Naive thymus-derived CD4-positive, alpha-beta T cell (primary cell): ENCODE measurements at regions of chr17 and their contacts with region 1.

Region 1: DNA sequence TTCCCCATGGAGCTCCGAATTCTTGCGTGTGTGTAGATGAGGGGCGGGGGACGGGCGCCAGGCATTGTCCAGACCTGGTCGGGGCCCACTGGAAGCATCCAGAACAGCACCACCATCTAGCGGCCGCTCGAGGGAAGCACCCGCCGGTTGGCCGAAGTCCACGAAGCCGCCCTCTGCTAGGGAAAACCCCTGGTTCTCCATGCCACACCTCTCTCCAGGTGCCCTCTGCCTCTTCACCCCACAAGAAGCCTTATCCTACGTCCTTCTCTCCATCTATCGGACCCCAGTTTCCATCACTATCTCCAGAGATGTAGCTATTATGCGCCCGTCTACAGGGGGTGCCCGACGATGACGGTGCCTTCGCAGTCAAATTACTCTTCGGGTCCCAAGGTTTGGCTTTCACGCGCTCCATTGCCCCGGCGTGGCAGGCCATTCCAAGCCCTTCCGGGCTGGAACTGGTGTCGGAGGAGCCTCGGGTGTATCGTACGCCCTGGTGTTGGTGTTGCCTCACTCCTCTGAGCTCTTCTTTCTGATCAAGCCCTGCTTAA is 617 bp upstream of the SENP3 start:
- DNase-seq: peak; percentile 60 to 86 (median 71)
- ATAC-seq: peak; percentile 76
- H3K4me3 ChIP-seq: peak overlapping the region; percentile 96
- H3K4me3 Mint-ChIP-seq: peak overlapping the region; percentile 87 to 97 (median 93)
- H3K27ac ChIP-seq: peak overlapping the region; percentile 92
- H3K27ac Mint-ChIP-seq: peak overlapping the region; percentile 90 to 100 (median 96)
- H3K4me1 ChIP-seq: peaks cover 17 to 54% of the 10 kb centered on the region in 2 donors
- H3K4me1 Mint-ChIP-seq: peaks cover 33 to 55% (median 49%) of the 10 kb centered on the region in 7 donors
- H3K27me3 ChIP-seq: no peaks in the 10 kb centered on the region
- H3K27me3 Mint-ChIP-seq: peaks cover 0 to 2% (median 0%) of the 10 kb centered on the region in 5 donors

Region 2: DNA sequence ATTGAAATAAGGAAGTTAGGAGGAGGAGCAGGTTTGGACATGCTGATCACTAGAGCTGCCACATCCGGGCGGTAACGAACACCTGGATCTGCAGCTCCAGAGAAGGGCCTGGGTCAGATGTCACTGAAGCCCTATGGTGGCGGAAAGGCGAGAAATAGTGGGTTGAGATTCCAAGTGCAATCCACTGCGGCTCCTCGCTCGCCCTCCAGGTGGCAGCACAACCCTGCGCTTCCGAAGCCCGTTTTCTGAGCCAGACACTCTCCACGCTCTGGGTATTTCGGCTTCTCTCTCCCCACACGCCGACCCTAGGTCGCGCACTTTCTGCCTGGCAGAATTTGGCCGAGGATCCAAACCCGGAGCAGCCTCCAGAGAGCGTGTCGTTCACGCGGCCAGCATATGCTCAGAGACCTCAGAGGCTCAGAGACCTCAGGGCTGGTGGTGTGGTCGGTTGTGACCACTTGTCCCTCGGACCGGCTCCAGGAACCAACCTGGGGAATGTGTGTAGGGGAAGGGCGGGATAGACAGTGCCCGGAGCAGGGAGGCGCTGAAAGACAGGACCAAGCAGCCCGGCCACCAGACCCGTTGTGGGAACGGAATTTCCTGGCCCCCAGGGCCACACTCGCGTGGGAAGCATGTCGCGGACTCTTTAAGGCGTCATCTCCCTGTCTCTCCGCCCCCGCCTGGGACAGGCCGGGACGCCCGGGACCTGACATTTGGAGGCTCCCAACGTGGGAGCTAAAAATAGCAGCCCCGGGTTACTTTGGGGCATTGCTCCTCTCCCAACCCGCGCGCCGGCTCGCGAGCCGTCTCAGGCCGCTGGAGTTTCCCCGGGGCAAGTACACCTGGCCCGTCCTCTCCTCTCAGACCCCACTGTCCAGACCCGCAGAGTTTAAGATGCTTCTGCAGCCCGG is 280.3 kb before region 1 on chr17:
- CTCF ChIA-PET with region 1: interaction called, 3 read pairs
- POLR2A ChIA-PET with region 1: no interaction called
- intact Hi-C with region 1: loop called in 1 of 2 experiments (anchors 1 kb)
- DNase-seq: peak; percentile 76 to 88 (median 85)
- ATAC-seq: peak; percentile 95
- H3K4me3 ChIP-seq: peak overlapping the region; percentile 66
- H3K4me3 Mint-ChIP-seq: peak overlapping the region; percentile 77 to 87 (median 84)
- H3K27ac ChIP-seq: no peak overlapping the region
- H3K27ac Mint-ChIP-seq: peak overlapping the region in 7 of 9 donors; percentile 6 to 88 (median 51)
- H3K4me1 ChIP-seq: peaks cover 11 to 23% of the 10 kb centered on the region in 2 donors
- H3K4me1 Mint-ChIP-seq: peaks cover 14 to 31% (median 21%) of the 10 kb centered on the region in 7 donors
- H3K27me3 ChIP-seq: no peaks in the 10 kb centered on the region
- H3K27me3 Mint-ChIP-seq: peaks cover 6 to 44% (median 17%) of the 10 kb centered on the region in 5 donors

Region 3: GRCh38 chr17:7351665-7352501 is 209.2 kb before region 1 on chr17 and contains the start of gene KCTD11:
- CTCF ChIA-PET with region 1: interaction called, 11 read pairs
- POLR2A ChIA-PET with region 1: interaction called, 5 read pairs
- intact Hi-C with region 1: loop called (anchors 1 kb)
- DNase-seq: peak; percentile 40 to 88 (median 58)
- ATAC-seq: peak; percentile 72
- H3K4me3 ChIP-seq: peak within 1 kb of the TSS; percentile 57
- H3K4me3 Mint-ChIP-seq: peak within 1 kb of the TSS; percentile 78 to 94 (median 88)
- H3K27ac ChIP-seq: peak within 1 kb of the TSS; percentile 74
- H3K27ac Mint-ChIP-seq: peak within 1 kb of the TSS; percentile 72 to 91 (median 86)
- H3K4me1 ChIP-seq: peaks cover 10 to 27% of the 10 kb centered on the region in 2 donors
- H3K4me1 Mint-ChIP-seq: peaks cover 14 to 62% (median 43%) of the 10 kb centered on the region in 7 donors
- H3K27me3 ChIP-seq: no peaks in the 10 kb centered on the region
- H3K27me3 Mint-ChIP-seq: no peaks in the 10 kb centered on the region
- total RNA-seq, gene KCTD11: 2.7 to 13.7 (median 4.0) TPM

Region 4: GRCh38 chr17:7413346-7413985 is 147.6 kb before region 1 on chr17:
- CTCF ChIA-PET with region 1: no interaction called
- POLR2A ChIA-PET with region 1: no interaction called
- intact Hi-C with region 1: no loop called
- DNase-seq: no peak
- ATAC-seq: no peak
- H3K4me3 ChIP-seq: no peak overlapping the region
- H3K4me3 Mint-ChIP-seq: no peak overlapping the region
- H3K27ac ChIP-seq: no peak overlapping the region
- H3K27ac Mint-ChIP-seq: no peak overlapping the region
- H3K4me1 ChIP-seq: peaks cover 0 to 3% of the 10 kb centered on the region in 2 donors
- H3K4me1 Mint-ChIP-seq: peaks cover 0 to 19% (median 5%) of the 10 kb centered on the region in 7 donors
- H3K27me3 ChIP-seq: no peaks in the 10 kb centered on the region
- H3K27me3 Mint-ChIP-seq: peaks cover 0 to 11% (median 0%) of the 10 kb centered on the region in 5 donors

Region 5: GRCh38 chr17:7454980-7455379 is 106.1 kb before region 1 on chr17:
- CTCF ChIA-PET with region 1: interaction called, 3 read pairs
- POLR2A ChIA-PET with region 1: interaction called, 5 read pairs
- intact Hi-C with region 1: loop called in 1 of 2 experiments (anchors 1 kb)
- DNase-seq: no peak
- ATAC-seq: peak; percentile 26
- H3K4me3 ChIP-seq: peak overlapping the region; percentile 92
- H3K4me3 Mint-ChIP-seq: peak overlapping the region; percentile 89 to 96 (median 95)
- H3K27ac ChIP-seq: peak overlapping the region; percentile 77
- H3K27ac Mint-ChIP-seq: peak overlapping the region; percentile 86 to 97 (median 94)
- H3K4me1 ChIP-seq: peaks cover 17 to 20% of the 10 kb centered on the region in 2 donors
- H3K4me1 Mint-ChIP-seq: peaks cover 13 to 44% (median 36%) of the 10 kb centered on the region in 7 donors
- H3K27me3 ChIP-seq: no peaks in the 10 kb centered on the region
- H3K27me3 Mint-ChIP-seq: no peaks in the 10 kb centered on the region

Region 6: GRCh38 chr17:7523033-7523432 is 38.1 kb before region 1 on chr17:
- CTCF ChIA-PET with region 1: interaction called, 45 read pairs
- POLR2A ChIA-PET with region 1: interaction called, 9 read pairs
- intact Hi-C with region 1: loop called (anchors 1 kb)
- DNase-seq: peak in 8 of 9 donors; percentile 34 to 58 (median 48)
- ATAC-seq: peak; percentile 64
- H3K4me3 ChIP-seq: no peak overlapping the region
- H3K4me3 Mint-ChIP-seq: no peak overlapping the region
- H3K27ac ChIP-seq: no peak overlapping the region
- H3K27ac Mint-ChIP-seq: peak overlapping the region in 4 of 9 donors; percentile 42 to 84 (median 51)
- H3K4me1 ChIP-seq: no peaks in the 10 kb centered on the region
- H3K4me1 Mint-ChIP-seq: peaks cover 3 to 6% (median 5%) of the 10 kb centered on the region in 7 donors
- H3K27me3 ChIP-seq: no peaks in the 10 kb centered on the region
- H3K27me3 Mint-ChIP-seq: peaks cover 0 to 2% (median 0%) of the 10 kb centered on the region in 5 donors

Region 7: DNA sequence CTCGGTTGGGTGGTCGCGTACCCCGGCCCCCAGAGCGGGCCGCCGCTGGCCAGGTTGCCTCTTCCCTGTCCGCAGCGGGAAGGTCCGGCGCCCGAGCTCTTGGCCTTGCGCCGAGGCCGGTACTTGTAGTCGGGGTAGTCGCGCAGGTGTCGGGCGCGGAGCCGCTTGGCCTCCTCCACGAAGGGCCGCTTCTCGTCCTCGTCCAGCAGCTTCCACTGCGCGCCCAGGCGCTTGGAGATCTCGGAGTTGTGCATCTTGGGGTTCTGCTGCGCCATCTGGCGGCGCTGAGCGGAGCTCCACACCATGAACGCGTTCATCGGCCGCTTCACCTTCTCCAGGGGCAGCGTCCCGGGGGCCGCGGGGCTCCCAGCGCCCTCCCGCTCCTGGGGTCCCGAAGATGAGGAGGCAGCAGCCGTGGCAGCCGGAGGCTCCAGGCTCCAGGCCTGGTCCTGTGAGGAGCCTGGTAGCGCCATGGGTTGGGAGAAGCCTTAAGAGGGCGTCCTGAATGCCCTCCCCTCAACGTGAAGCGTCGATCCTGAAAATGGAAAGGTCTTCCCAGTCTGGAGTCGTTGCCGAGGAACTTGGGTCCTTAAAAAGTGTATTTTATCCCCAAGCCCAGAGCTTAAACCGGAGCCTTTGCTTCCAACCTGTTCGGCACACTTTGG is 28.2 kb after region 1 on chr17:
- CTCF ChIA-PET with region 1: interaction called, 18 read pairs
- POLR2A ChIA-PET with region 1: interaction called, 19 read pairs
- intact Hi-C with region 1: loop called (anchors 1 kb)
- DNase-seq: peak; percentile 54 to 72 (median 63)
- ATAC-seq: peak; percentile 87
- H3K4me3 ChIP-seq: no peak overlapping the region
- H3K4me3 Mint-ChIP-seq: no peak overlapping the region
- H3K27ac ChIP-seq: no peak overlapping the region
- H3K27ac Mint-ChIP-seq: peak overlapping the region in 2 of 9 donors; percentile 13 to 38
- H3K4me1 ChIP-seq: peaks cover 8 to 11% of the 10 kb centered on the region in 2 donors
- H3K4me1 Mint-ChIP-seq: peaks cover 9 to 14% (median 13%) of the 10 kb centered on the region in 7 donors
- H3K27me3 ChIP-seq: no peaks in the 10 kb centered on the region
- H3K27me3 Mint-ChIP-seq: no peaks in the 10 kb centered on the region